ENCODE measurements at regions of chr3 and their contacts with region 1.

Region 1: DNA sequence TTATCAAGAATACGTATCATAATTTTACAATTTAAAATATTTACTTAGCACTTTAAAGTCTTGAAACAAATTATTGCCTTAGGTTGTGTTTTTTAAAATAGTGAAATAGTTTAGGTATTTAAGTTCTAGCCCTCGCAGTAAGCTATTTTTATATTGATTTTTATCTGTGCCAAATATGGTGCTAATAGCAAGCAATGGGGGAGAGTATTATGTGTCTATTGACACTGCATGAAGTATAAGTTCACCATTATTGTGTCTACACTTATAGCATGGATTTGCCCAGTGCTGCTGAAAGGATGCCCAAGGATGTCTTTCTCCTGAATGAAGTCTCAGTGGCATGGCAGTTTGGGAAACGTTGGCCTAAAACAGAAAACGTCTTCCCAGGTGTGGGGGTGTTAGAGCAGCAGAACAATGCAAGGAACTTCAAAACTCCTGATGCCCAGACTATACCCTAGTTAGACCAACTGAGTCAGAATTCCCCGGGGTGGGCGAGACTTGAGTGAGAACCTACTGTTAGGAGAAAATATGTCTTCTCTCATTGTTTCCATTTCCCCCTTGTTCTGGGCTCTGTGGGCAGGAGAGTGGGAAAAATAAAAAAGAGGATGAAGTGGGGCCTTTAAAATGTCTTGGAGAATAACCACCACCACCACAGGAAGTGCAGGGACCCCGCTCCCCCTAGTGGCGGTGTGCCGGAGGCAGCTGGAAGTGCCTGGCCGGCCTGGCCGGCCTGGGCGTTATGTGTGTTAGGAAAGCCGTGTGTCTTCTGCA is 104.2 kb upstream of the SLC7A14 start:
- DNase-seq: peak in 1 of 2 experiments; percentile 88
- H3K4me3 ChIP-seq: no peak overlapping the region
- H3K27ac ChIP-seq: no peak overlapping the region
- H3K4me1 ChIP-seq: peaks cover 3 to 7% (median 4%) of the 10 kb centered on the region in 4 experiments; a peak in 4 of 7 replicates
- H3K27me3 ChIP-seq: no peaks in the 10 kb centered on the region
- CTCF ChIP-seq: peak; percentile 75 to 89 (median 80)
- EP300 ChIP-seq: no peak
- POLR2A ChIP-seq: no peak
- RAD21 ChIP-seq: peak; percentile 79 to 85

Region 2: GRCh38 chr3:170705131-170705530 is 15.1 kb after region 1 on chr3:
- CTCF ChIA-PET with region 1: interaction called, 13 read pairs
- POLR2A ChIA-PET with region 1: no interaction called
- DNase-seq: no peak
- H3K4me3 ChIP-seq: no peak overlapping the region
- H3K27ac ChIP-seq: no peak overlapping the region
- H3K4me1 ChIP-seq: no peaks in the 10 kb centered on the region
- H3K27me3 ChIP-seq: no peaks in the 10 kb centered on the region
- CTCF ChIP-seq: no peak
- EP300 ChIP-seq: no peak
- POLR2A ChIP-seq: no peak
- RAD21 ChIP-seq: no peak